ENCODE measurements at regions of chr11 and their contacts with region 1.

Region 1: DNA sequence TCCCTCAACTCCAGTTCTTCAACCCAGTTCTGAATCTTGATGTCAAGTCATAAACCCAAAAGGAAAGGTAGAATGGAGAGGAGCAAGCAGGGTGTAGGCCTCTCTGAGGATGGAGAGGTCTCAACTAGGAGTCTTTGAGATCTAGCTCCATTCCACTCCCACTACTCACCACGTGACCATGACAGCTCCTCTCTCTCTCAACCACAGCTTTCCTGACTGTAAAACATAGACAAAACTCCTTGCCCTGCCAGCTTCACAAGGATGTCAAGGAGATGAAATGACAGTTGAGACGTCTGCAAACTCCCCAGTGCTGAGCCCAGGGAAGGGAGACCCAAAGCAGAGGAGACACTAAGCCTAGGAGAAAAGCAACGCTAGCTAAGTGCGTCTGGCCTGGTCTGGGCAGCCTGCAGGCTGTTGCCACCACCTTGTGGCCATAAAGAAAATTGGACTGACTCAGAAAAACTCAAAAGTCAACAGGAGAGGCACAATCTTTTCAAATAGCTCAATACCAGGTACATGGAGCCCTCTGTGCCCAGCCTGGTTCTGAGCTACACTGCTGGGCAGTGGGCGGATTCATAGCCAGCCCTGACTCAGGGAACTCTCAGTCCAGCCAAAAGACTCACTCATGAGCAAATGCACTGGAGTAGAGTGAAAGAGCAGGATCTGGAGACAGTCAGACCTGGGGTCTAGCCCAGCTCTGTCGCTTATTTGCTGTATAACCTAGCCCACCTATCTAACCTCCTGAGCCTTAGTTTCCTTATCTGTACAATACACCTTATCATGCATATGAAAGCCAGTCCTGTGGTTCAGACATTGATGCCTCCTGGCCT is 3.4 kb downstream of the CLPB start:
- DNase-seq: peak; percentile 31
- ATAC-seq: peak; percentile 24
- H3K4me3 Mint-ChIP-seq: no peak overlapping the region
- H3K27ac Mint-ChIP-seq: peak overlapping the region; percentile 86
- H3K4me1 Mint-ChIP-seq: peaks cover 9% of the 10 kb centered on the region
- H3K27me3 Mint-ChIP-seq: no peaks in the 10 kb centered on the region
- CTCF ChIP-seq: peak; percentile 39; the same call in 1 of the 2 replicates

Region 2: GRCh38 chr11:72157126-72157525 is 273.8 kb before region 1 on chr11:
- CTCF ChIA-PET with region 1: no interaction called
- POLR2A ChIA-PET with region 1: no interaction called
- DNase-seq: no peak
- ATAC-seq: no peak
- H3K4me3 Mint-ChIP-seq: no peak overlapping the region
- H3K27ac Mint-ChIP-seq: no peak overlapping the region
- H3K4me1 Mint-ChIP-seq: no peaks in the 10 kb centered on the region
- H3K27me3 Mint-ChIP-seq: peaks cover 14% of the 10 kb centered on the region
- CTCF ChIP-seq: no peak

Region 3: DNA sequence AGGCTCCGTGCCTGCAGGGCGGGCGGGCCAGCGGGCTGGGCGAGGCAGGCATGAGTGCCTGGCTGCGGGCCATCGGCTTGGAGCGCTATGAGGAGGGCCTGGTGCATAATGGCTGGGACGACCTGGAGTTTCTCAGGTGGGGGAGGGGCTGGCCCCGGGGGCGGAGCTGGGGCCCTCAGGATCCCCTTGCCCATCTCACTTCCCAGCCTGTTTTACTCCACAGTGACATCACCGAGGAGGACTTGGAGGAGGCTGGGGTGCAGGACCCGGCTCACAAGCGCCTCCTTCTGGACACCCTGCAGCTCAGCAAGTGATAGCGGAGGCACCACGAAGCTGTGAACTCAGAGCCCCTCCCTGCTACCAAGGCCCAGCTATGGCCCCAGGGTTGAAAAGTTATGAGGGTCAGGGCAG is 192.9 kb before region 1 on chr11:
- CTCF ChIA-PET with region 1: interaction called, 89 read pairs
- POLR2A ChIA-PET with region 1: no interaction called
- DNase-seq: peak; percentile 94
- ATAC-seq: peak; percentile 81
- H3K4me3 Mint-ChIP-seq: peak overlapping the region; percentile 73
- H3K27ac Mint-ChIP-seq: no peak overlapping the region
- H3K4me1 Mint-ChIP-seq: peaks cover 31% of the 10 kb centered on the region
- H3K27me3 Mint-ChIP-seq: peaks cover 46% of the 10 kb centered on the region
- CTCF ChIP-seq: peak; percentile 84

Region 4: DNA sequence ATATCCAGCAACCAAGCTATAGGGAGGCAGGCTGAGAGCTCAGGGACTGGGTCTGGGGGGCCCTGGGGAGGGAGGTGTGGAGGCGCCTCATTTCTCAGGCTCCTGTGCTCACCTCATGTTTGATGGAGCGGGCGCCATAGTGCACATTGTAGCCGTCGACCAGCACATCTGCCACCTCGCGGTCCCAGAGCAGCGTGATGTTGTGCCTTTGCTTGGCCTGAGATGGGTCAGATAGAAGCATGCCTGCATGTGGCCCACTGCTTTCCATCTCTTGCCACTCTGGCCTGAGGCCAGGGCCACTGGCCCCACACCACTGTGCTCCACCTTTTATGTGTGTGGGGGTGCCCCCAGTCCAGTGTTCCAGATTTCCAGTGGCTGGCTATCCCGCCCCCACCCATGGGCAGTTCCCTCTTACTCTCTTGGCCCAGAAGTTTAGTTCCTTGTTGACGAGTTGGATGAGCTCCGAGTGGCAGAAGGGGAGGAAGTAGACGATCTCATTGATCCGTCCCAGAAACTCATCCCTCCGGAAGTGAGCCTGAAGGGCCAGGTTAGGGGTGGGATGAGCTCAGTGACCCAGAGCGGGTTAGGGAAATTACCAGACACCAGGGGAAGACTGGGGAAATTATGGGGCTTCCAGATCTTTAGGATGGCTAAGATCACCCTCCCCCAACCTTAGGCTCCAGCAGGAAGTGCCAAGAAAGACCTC is 136.9 kb before region 1 on chr11:
- CTCF ChIA-PET with region 1: interaction called, 29 read pairs
- POLR2A ChIA-PET with region 1: no interaction called
- DNase-seq: no peak
- ATAC-seq: no peak
- H3K4me3 Mint-ChIP-seq: no peak overlapping the region
- H3K27ac Mint-ChIP-seq: no peak overlapping the region
- H3K4me1 Mint-ChIP-seq: no peaks in the 10 kb centered on the region
- H3K27me3 Mint-ChIP-seq: no peaks in the 10 kb centered on the region
- CTCF ChIP-seq: no peak

Region 5: GRCh38 chr11:72343006-72343756 is 87.8 kb before region 1 on chr11:
- CTCF ChIA-PET with region 1: interaction called, 25 read pairs
- POLR2A ChIA-PET with region 1: no interaction called
- DNase-seq: no peak
- ATAC-seq: no peak
- H3K4me3 Mint-ChIP-seq: no peak overlapping the region
- H3K27ac Mint-ChIP-seq: no peak overlapping the region
- H3K4me1 Mint-ChIP-seq: no peaks in the 10 kb centered on the region
- H3K27me3 Mint-ChIP-seq: no peaks in the 10 kb centered on the region
- CTCF ChIP-seq: no peak

Region 6: DNA sequence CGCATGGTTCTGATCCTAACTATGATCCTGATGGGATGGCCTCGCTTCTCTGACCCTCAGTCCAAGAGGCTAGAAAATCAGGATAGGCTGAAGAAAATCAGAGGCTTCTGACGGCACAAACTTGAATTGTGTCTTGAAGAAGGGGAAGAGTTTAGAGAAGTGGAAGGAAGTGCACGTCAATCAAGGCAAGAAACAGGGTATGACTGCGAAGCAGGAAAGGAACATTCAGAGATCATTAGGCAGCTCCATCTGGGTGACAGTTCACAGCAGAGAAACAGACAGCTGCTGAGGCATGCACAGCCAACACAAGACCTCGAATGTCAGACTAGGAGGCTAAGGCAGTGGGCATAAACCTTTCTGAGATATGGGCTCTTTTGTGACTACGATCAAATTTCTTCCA is 25.9 kb before region 1 on chr11:
- CTCF ChIA-PET with region 1: interaction called, 48 read pairs
- POLR2A ChIA-PET with region 1: no interaction called
- DNase-seq: no peak
- ATAC-seq: no peak
- H3K4me3 Mint-ChIP-seq: no peak overlapping the region
- H3K27ac Mint-ChIP-seq: no peak overlapping the region
- H3K4me1 Mint-ChIP-seq: peaks cover 23% of the 10 kb centered on the region
- H3K27me3 Mint-ChIP-seq: no peaks in the 10 kb centered on the region
- CTCF ChIP-seq: no peak

Region 7: GRCh38 chr11:72471005-72471898 is 40.3 kb after region 1 on chr11:
- CTCF ChIA-PET with region 1: interaction called, 27 read pairs
- POLR2A ChIA-PET with region 1: no interaction called
- DNase-seq: peak; percentile 72
- ATAC-seq: peak; percentile 97
- H3K4me3 Mint-ChIP-seq: peak overlapping the region; percentile 27
- H3K27ac Mint-ChIP-seq: peak overlapping the region; percentile 28; the same call in 1 of the 2 replicates
- H3K4me1 Mint-ChIP-seq: peaks cover 7% of the 10 kb centered on the region
- H3K27me3 Mint-ChIP-seq: peaks cover 16% of the 10 kb centered on the region
- CTCF ChIP-seq: peak; percentile 58

Region 8: GRCh38 chr11:72519220-72519881 is 88.4 kb after region 1 on chr11:
- CTCF ChIA-PET with region 1: no interaction called
- POLR2A ChIA-PET with region 1: no interaction called
- DNase-seq: no peak
- ATAC-seq: no peak
- H3K4me3 Mint-ChIP-seq: no peak overlapping the region
- H3K27ac Mint-ChIP-seq: no peak overlapping the region
- H3K4me1 Mint-ChIP-seq: no peaks in the 10 kb centered on the region
- H3K27me3 Mint-ChIP-seq: peaks cover 4% of the 10 kb centered on the region; the same call in 1 of the 2 replicates
- CTCF ChIP-seq: no peak

Region 9: DNA sequence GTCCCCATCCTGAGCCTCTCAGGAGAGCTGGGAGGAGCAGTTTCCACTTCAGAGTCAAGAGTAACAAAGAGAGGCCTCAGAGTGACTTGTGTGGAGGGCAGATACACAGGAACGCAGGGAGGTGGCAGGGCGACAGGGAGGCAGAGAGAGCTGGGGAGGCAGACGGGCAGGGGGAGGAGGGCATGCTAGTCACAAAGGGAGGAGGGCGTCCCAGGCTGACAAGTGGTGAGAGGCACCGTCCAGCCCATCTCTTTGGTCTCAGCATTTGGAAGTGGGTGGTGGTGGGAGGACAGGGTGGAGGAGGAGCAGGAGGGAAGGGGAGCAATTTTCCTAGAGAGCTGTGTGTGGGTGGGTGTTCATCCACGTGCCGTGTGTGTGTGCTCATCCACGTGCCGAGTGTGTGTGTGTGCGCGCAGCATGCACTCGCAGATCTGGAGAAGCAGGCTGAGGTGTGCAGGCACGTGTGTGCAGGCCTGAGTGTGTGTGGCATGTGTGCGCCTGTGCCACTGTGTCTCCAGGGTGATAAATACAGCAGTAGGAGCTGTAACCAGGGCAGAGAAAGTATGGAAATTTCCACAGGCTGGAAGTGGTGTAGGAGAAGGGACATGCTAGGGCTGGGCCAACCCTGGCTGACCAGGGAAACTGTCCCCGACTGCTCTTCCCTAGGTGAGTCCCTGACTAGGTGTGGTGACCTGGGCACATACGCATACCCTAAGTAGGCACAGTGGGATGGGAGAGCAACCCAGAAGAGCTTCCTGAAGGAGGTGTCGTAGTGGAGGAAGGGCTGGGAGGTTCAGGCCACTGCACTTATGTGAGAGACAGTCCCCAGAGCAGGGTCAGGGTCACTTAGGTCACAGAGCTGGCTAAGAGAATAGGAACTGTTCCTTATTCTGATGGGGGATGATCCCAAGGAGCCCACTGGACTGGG is 250.5 kb after region 1 on chr11:
- CTCF ChIA-PET with region 1: no interaction called
- POLR2A ChIA-PET with region 1: no interaction called
- DNase-seq: no peak
- ATAC-seq: no peak
- H3K4me3 Mint-ChIP-seq: no peak overlapping the region
- H3K27ac Mint-ChIP-seq: no peak overlapping the region
- H3K4me1 Mint-ChIP-seq: peaks cover 17% of the 10 kb centered on the region
- H3K27me3 Mint-ChIP-seq: peaks cover 46% of the 10 kb centered on the region
- CTCF ChIP-seq: no peak